OCI-LY7 (cell line): ENCODE measurements at regions of chr7 and their contacts with region 1.

Region 1: DNA sequence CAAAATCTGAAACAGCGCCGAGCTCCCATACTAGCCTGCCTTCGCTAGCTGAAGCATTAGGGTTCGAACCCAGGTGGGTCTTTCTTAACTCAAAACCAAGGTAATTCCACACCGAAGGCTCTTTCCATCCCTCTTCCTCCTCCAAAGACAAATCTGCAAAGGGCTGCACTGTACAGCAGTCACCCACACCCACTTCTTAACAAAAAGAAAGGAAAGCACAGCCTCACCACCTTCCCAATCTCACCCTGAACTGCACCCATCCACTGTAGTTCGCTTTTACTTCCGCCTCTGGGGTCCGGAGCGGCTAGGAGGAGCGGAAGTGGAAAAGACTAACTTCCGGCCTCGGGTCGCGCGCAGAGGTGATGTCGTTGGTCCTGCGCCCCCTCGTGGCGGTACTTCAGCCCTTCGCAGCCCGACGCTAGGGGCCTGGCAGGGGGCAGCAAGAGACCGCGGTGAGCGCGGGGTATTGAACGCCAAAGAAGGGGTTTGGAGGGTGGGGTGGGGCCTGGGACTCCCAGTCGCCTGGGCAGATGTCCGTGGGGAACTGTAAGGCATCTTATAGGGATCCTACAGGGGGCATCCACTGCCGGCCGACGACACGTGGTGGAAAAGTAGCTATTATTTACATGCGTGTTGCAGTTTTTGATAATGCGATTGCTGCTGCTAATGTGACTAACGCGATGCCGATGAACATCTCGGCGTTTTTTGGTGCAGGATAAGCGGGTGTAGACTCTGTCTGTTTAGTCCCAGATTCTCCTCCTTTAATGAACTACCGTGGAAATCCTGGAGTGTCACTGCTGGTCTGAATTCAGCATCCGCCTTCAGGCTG is at the start of gene MTERF1:
- DNase-seq: peak; percentile 95
- H3K4me3 ChIP-seq: peak within 1 kb of the TSS; percentile 86
- H3K27ac ChIP-seq: peak within 1 kb of the TSS; percentile 21
- H3K4me1 ChIP-seq: peaks cover 11% of the 10 kb centered on the region
- CTCF ChIP-seq: peak; percentile 97
- total RNA-seq, gene MTERF1: 12.6 and 16.1 TPM in 2 replicates

Region 2: DNA sequence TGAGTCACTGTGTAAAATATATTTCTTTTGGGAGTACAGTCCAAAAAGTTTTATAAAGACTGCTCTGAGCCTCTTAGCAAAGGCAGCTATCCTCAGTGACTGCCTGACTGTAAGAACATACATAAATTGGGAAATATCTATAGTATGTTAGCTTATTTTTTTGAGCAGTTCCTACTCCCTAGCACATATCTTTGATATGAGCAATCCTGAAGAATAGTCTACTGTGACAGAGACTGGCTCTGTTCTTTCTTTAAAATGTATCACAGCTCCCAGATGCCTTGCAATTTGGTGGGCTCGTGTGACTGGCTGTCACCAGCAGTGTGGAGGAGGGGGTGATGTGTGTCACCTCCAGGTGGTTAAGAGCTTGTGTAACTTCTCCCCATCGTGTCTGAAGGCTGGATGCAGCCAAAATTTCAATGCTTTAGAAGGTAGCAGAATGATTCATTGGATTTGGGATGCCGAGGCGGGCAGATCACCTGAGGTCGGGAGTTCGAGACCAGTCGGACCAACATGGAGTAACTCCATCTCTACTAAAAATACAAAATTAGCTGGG is 48.1 kb before region 1 on chr7:
- CTCF ChIA-PET with region 1: no interaction called
- POLR2A ChIA-PET with region 1: interaction called, 4 read pairs
- intact Hi-C with region 1: loop called (anchors 5 kb)
- DNase-seq: no peak
- H3K4me3 ChIP-seq: no peak overlapping the region
- H3K27ac ChIP-seq: no peak overlapping the region
- H3K4me1 ChIP-seq: no peaks in the 10 kb centered on the region
- CTCF ChIP-seq: no peak

Region 3: GRCh38 chr7:91843831-91844230 is 36.8 kb before region 1 on chr7:
- CTCF ChIA-PET with region 1: no interaction called
- POLR2A ChIA-PET with region 1: no interaction called
- intact Hi-C with region 1: no loop called
- DNase-seq: peak; percentile 23
- H3K4me3 ChIP-seq: peak overlapping the region; percentile 22
- H3K27ac ChIP-seq: no peak overlapping the region
- H3K4me1 ChIP-seq: peaks cover 10% of the 10 kb centered on the region
- CTCF ChIP-seq: no peak

Region 4: DNA sequence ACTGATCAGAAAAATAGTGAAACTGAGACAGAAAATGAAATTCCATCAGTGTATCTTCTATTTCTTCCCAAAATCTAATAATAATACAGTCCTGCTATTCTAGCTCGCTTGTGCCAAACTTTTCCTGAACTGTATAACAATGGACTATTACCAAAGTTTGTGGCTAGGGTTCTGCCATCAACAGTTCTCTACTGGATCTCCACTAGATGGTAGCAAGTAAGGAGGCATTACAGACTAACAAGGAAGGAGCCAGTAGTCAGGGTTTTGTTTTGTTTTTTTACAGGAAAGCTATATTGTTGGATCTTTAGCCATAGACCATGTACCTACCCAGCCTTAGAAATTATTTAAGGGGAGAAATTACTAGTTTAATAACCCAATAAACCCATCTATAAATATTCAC is 11.0 kb before region 1 on chr7:
- CTCF ChIA-PET with region 1: interaction called, 3 read pairs
- POLR2A ChIA-PET with region 1: interaction called, 11 read pairs
- intact Hi-C with region 1: no loop called
- DNase-seq: no peak
- H3K4me3 ChIP-seq: no peak overlapping the region
- H3K27ac ChIP-seq: no peak overlapping the region
- H3K4me1 ChIP-seq: no peaks in the 10 kb centered on the region
- CTCF ChIP-seq: no peak

Region 5: DNA sequence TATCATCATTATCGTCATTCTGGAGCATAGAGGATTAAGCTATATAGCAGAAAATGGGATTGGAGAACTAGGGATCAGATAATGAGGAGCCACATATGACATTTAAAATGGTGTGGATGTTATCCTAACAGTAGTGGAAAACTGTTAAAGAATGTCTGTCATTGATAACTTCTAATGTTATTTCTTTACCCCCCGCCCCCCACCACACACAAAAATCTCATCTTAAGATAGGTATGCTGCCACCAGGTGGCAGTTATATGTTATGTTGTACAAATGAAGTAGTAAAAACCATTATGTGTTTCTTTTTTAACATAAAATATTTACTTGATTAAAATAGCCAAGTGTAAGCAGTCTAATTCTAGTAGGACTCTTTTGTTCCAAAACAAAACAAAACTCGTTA is 73.0 kb after region 1 on chr7:
- CTCF ChIA-PET with region 1: no interaction called
- POLR2A ChIA-PET with region 1: no interaction called
- intact Hi-C with region 1: loop called (anchors 2 kb)
- DNase-seq: peak; percentile 32
- H3K4me3 ChIP-seq: no peak overlapping the region
- H3K27ac ChIP-seq: no peak overlapping the region
- H3K4me1 ChIP-seq: no peaks in the 10 kb centered on the region
- CTCF ChIP-seq: peak; percentile 81

Region 6: DNA sequence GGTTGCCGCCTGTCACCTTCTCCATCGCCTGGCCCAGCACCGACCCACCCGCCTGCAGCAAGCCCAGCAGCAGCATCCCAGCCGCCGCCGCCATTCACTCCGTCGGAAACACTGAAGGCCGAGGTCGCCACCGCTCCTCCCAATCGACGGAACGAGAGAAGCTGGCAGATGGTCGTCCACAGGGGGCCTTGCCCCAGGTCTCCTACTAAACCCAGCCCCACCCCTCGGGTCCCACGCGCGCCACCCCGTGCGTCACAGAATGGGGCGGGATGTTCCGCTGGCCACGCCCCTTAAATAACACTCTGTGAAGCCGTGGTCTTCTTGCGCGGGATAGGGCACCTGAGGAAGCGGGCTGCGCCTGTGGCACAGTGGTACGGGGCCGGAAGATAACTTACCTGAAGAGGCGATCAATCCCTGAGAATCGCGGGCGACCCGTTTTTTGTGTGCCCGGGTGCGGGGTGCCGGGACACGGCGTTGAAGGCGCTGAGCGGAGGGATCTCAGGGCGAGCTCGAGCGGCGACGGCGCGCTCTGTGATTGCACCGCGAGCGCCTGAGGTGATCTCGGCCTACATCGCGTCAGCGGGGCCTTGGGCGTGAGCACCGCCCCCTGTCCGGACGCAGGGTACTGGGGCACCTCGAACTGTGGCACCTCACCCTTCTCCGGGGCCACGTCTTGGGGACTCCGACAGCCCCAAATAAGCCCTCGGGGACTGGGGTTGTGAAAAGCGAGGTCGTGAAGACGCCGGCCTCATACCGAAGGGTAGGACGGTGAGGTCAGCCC is 253.8 kb after region 1 on chr7 and contains the start of gene CYP51A1:
- CTCF ChIA-PET with region 1: no interaction called
- POLR2A ChIA-PET with region 1: no interaction called
- intact Hi-C with region 1: loop called (anchors 5 kb)
- DNase-seq: peak; percentile 94
- H3K4me3 ChIP-seq: peak within 1 kb of the TSS; percentile 92
- H3K27ac ChIP-seq: peak within 1 kb of the TSS; percentile 68
- H3K4me1 ChIP-seq: peaks cover 40% of the 10 kb centered on the region
- CTCF ChIP-seq: 0 out of 2 replicates have a peak, but pooled peaks have one; percentile 22
- total RNA-seq, gene CYP51A1: 51.7 and 53.4 TPM in 2 replicates

Region 7: GRCh38 chr7:92447345-92448204 is 566.9 kb after region 1 on chr7 and contains the start of gene GATAD1:
- CTCF ChIA-PET with region 1: no interaction called
- POLR2A ChIA-PET with region 1: interaction called, 3 read pairs
- intact Hi-C with region 1: loop called (anchors 2 kb)
- DNase-seq: peak; percentile 92
- H3K4me3 ChIP-seq: peak within 1 kb of the TSS; percentile 90
- H3K27ac ChIP-seq: peak within 1 kb of the TSS; percentile 68
- H3K4me1 ChIP-seq: peaks cover 5% of the 10 kb centered on the region
- CTCF ChIP-seq: peak; percentile 86
- total RNA-seq, gene GATAD1: 15.5 and 19.6 TPM in 2 replicates